ENCODE measurements at regions of chr13 and their contacts with region 1.

Region 1: GRCh38 chr13:98504371-98504963 is 72.4 kb downstream of the STK24 start:
- DNase-seq: peak; percentile 52
- H3K4me3 Mint-ChIP-seq: no peak overlapping the region
- H3K27ac Mint-ChIP-seq: no peak overlapping the region
- H3K4me1 Mint-ChIP-seq: peaks cover 74% of the 10 kb centered on the region
- H3K27me3 Mint-ChIP-seq: no peaks in the 10 kb centered on the region

Region 2: DNA sequence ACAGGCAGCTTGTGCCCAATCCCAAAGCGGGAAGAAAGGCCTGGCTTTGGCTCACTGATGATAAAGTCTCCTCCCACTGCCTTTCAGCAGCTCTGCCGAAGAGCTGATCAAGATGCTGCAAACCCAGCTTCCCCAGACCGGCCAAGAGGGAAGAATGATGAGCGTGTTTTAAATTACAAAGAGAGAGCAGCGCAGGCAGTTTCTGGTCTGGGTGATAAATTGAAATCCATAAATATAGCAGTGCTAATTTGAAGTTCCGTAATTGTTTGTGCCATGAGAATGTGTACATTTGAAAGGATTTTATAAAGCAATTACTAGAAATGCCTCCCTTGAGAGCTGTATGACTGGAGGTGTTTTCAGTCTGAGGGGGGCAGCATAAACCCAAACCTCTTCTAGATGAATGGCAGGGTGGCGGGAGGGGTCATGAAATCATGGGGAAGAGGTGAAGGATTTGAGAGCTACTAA is 99.3 kb before region 1 on chr13:
- CTCF ChIA-PET with region 1: no interaction called
- POLR2A ChIA-PET with region 1: no interaction called
- DNase-seq: no peak
- H3K4me3 Mint-ChIP-seq: no peak overlapping the region
- H3K27ac Mint-ChIP-seq: no peak overlapping the region
- H3K4me1 Mint-ChIP-seq: no peaks in the 10 kb centered on the region
- H3K27me3 Mint-ChIP-seq: peaks cover 12% of the 10 kb centered on the region

Region 3: DNA sequence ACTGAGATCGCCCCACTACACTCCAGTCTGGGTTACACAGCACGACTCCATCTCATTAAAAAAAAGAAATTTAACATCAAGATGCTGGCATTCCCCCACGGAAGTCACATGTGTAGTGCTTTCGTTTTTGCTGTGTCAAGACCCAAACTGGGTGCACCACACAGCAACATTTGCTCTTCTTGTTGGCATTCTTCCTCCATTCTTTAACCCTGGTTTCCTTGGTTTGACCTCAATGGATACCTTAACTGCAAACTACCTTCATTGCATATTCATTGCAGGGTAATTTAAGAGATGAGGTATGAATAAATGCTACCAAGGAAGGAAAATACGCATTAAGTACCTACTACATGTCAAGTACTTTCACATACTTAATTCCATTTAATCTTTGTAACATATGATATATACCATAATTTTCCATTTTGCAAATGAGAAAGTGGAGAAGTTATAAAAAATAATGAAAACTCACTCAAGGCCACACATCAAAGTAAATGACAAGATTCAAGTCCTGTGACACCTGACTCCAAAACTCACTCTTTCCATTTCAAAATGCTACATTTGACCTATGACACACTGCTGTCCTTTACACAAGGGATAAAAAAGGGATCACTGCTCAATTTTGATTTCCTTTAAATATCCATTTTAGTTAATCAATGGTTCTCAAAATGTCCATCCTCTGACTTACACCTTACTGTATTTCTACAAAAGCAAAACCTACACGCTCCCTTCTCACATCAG is 13.3 kb after region 1 on chr13:
- CTCF ChIA-PET with region 1: interaction called, 4 read pairs
- POLR2A ChIA-PET with region 1: interaction called, 11 read pairs
- DNase-seq: peak; percentile 62
- H3K4me3 Mint-ChIP-seq: peak overlapping the region; percentile 20
- H3K27ac Mint-ChIP-seq: peak overlapping the region; percentile 75
- H3K4me1 Mint-ChIP-seq: peaks cover 96% of the 10 kb centered on the region
- H3K27me3 Mint-ChIP-seq: no peaks in the 10 kb centered on the region